ENCODE measurements at regions of chr1 and their contacts with region 1.

Region 1: DNA sequence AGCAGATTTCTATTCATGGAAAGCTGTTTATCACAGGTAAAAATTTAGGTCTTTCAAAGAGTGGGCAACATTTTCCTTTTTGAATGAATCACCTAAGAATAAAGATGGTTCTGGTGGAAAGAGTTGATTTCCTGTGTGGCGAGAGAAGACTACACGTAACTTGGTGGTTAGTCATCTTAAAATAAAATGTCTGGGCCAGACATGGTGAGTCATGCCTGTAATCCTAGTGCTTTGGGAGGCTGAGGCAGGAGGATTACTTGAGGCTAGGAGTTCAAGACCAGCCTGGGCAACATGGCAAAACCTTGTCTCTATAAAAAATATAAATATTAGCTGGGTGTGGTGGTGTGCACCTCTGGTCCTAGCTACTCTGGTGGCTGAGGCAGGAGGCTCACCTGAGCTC is 65.7 kb downstream of the DISP1 start:
- DNase-seq: no peak
- H3K4me3 Mint-ChIP-seq: no peak overlapping the region
- H3K27ac Mint-ChIP-seq: no peak overlapping the region
- H3K4me1 Mint-ChIP-seq: peaks cover 11% of the 10 kb centered on the region
- H3K27me3 Mint-ChIP-seq: no peaks in the 10 kb centered on the region

Region 2: GRCh38 chr1:222769181-222769580 is 111.4 kb before region 1 on chr1:
- intact Hi-C with region 1: no loop called
- DNase-seq: no peak
- H3K4me3 Mint-ChIP-seq: no peak overlapping the region
- H3K27ac Mint-ChIP-seq: no peak overlapping the region
- H3K4me1 Mint-ChIP-seq: peaks cover 6% of the 10 kb centered on the region
- H3K27me3 Mint-ChIP-seq: peaks cover 1% of the 10 kb centered on the region

Region 3: DNA sequence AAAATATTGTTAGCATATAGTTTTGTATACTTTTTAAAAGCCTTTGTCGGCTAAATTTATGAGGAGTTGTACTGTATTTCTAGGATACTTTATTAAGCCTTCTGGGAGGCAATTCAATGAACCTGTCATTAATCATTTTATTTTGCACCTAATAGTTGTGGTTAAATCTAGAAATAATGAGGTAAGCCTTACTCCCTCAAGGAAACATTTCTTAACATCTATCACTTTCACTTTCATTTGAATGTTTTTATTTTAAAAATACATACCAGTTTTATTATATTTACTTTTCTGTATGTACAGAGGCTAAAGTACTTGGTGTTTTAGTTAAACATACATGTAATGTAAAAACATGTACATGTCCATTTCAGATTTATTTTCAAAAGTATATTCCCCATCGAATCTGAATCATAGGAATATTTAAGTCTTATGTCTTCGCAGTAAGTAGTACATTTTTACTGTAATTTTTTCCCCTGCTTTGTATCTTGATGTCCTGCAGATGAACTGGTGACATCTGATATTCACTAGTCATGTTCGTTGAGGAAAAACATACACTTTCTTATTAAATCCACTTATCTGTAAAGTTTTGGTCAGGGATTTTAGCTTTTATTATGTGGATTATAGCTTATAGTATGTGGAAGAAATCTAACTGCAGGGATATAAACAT is 17.1 kb after region 1 on chr1:
- intact Hi-C with region 1: loop called (anchors 2 kb)
- DNase-seq: no peak
- H3K4me3 Mint-ChIP-seq: peak overlapping the region; percentile 4
- H3K27ac Mint-ChIP-seq: peak overlapping the region; percentile 77
- H3K4me1 Mint-ChIP-seq: peaks cover 12% of the 10 kb centered on the region
- H3K27me3 Mint-ChIP-seq: no peaks in the 10 kb centered on the region

Measured in activated T-helper 2 cell treated with anti-CD3 and anti-CD28 coated beads, Interferon-gamma antibody, Interleukin-2, Interleukin-4, amounts not matched to agents 10 μg/mL and 5 μg/mL and 100 μg/mL, durations not matched to agents 14 hours and 24 hours and 36 hours (primary cell).